ENCODE measurements at regions of chr2 and their contacts with region 1.

Region 1: DNA sequence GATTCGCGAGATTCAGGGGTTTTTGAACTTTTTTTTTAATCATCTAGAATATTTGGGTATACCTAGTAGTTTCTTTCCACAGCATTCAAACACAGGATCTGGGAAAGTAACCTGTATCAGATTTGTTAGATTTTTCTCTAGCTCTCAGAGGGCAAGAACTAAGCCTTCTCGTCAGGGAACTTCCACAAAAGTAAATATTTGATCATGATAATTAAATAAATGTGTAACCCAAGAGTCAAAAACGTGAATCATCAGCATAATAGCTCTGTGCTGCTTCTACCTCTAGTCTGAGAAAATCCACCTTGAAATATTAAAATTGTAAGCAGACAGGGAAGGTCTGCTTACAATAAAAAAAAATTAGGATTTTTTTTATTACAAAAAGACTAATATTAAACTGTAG is 225.7 kb upstream of the SPOPL start:
- DNase-seq: peak; percentile 88
- ATAC-seq: peak; percentile 91
- H3K4me3 ChIP-seq: peak overlapping the region; percentile 18; the same call in 1 of the 2 replicates
- H3K27ac ChIP-seq: peak overlapping the region; percentile 95
- H3K4me1 ChIP-seq: peaks cover 25% of the 10 kb centered on the region
- H3K27me3 ChIP-seq: no peaks in the 10 kb centered on the region
- CTCF ChIP-seq: no peak

Region 2: DNA sequence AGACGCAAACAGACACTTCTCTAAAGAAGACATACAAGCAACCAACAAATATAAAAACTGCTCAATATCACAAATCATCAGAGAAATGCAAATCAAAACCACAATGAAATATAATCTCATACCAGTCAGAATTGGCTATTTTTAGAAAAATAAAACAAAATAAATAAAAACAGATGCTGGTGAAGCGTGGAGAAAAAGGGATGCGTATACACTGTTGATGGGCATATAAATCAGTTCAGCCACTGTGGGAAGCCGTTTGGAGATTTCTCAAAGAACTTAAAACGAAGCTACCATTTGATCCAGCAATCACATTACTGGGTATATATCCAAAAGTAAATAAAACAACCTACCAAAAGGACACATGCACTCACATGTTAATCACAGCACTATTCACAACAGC is 105.4 kb before region 1 on chr2:
- CTCF ChIA-PET with region 1: no interaction called
- POLR2A ChIA-PET with region 1: no interaction called
- intact Hi-C with region 1: no loop called
- DNase-seq: no peak
- ATAC-seq: no peak
- H3K4me3 ChIP-seq: no peak overlapping the region
- H3K27ac ChIP-seq: no peak overlapping the region
- H3K4me1 ChIP-seq: no peaks in the 10 kb centered on the region
- H3K27me3 ChIP-seq: no peaks in the 10 kb centered on the region
- CTCF ChIP-seq: no peak

Region 3: DNA sequence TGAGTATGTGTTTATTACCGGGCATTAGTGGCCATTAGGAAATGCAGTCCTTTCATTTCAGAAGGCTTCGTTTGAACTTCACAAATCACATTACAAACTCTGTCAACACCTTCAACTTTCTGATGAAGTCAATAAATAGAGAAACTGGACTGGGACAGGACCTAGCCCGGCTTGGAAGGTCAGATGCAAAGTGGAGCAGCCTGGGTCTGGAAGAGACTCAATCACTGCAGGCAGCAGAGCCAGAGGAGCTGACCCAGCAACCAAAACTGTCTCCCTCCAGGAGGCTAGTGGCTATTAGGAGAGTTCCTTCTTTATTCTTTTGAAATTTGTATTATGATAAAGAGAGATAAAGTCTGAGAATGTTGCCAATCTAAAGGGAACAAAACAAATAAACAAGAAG is 58.4 kb after region 1 on chr2:
- CTCF ChIA-PET with region 1: no interaction called
- POLR2A ChIA-PET with region 1: no interaction called
- intact Hi-C with region 1: loop called (anchors 5 kb)
- DNase-seq: no peak
- ATAC-seq: no peak
- H3K4me3 ChIP-seq: no peak overlapping the region
- H3K27ac ChIP-seq: no peak overlapping the region
- H3K4me1 ChIP-seq: no peaks in the 10 kb centered on the region
- H3K27me3 ChIP-seq: no peaks in the 10 kb centered on the region
- CTCF ChIP-seq: no peak

Region 4: DNA sequence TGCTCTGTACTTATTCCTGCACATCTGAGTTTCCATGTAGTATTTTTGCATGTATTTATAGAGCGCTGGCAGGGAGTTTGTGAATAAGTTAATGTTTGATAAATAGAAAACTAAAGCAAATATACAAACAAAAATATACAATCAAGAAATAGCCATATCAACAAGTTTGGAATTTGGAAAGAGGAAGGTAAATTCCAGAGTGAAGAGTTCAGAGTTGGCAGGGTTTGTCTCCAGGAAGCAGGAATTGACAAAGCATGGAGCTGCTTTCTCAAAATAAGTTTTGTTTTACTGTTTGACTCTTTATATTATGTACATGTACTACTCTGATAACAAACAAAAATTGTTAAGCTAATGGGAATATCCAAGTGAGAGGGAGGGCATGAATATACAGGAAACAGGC is 306.0 kb after region 1 on chr2:
- CTCF ChIA-PET with region 1: no interaction called
- POLR2A ChIA-PET with region 1: no interaction called
- intact Hi-C with region 1: no loop called
- DNase-seq: no peak
- ATAC-seq: no peak; the same call in 1 of the 2 replicates
- H3K4me3 ChIP-seq: no peak overlapping the region
- H3K27ac ChIP-seq: no peak overlapping the region
- H3K4me1 ChIP-seq: no peaks in the 10 kb centered on the region
- H3K27me3 ChIP-seq: no peaks in the 10 kb centered on the region
- CTCF ChIP-seq: no peak